GM13977 (cell line): ENCODE measurements at regions of chr10 and their contacts with region 1.

Region 1: DNA sequence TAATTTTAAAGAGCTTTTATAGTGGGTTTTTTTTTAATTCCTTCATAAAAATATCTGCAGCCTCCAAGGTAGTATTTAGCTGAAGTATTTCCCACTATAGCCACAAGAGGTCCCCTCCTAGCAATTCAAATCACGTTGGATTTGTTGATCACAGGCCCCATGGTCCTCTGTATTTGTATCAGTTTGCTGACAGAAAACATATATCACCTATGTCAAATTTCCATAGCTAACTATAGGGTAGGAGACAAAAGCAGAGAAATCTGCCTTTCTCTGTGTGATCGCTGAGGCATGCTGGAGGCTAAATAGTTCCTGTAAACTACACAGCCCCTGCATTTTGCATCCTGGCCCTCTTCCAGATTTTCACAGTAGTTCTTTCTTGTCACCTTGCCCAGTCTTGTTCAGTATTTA is 1.7 kb upstream of the CTNNA3 start:
- DNase-seq: peak; percentile 59
- CTCF ChIP-seq: peak; percentile 63

Region 2: DNA sequence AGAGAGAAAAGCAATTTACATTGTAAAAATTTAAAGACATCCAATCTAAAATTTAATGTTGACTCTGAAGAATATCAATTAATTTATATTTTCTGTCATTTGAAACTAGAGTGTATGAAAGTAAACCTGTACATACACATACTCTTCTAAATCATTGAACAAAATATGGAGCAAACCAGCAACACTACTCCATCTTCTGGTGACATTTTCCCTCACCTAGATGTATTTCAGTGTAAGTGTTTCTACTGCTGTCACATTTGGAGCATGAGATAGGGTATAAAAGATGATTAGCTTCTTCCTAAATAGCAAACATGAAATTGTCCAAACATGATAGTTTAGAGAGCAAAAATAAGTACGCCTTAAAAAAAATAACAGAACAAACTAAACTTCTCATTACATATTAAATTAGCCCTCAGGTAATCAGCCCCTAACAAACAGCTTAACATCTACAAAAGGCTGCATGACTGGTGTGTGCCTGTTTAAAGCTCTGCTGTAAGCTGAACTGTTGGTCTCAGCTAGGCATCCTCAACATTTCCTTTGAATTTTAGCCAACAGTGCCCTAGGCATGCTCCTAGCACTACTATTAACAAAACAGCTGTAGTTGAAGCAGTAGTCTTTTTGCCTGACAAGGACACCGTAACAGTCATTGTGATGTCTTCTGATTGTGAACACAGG is 191.5 kb before region 1 on chr10:
- in situ Hi-C with region 1: no loop called
- DNase-seq: no peak
- CTCF ChIP-seq: no peak

Region 3: DNA sequence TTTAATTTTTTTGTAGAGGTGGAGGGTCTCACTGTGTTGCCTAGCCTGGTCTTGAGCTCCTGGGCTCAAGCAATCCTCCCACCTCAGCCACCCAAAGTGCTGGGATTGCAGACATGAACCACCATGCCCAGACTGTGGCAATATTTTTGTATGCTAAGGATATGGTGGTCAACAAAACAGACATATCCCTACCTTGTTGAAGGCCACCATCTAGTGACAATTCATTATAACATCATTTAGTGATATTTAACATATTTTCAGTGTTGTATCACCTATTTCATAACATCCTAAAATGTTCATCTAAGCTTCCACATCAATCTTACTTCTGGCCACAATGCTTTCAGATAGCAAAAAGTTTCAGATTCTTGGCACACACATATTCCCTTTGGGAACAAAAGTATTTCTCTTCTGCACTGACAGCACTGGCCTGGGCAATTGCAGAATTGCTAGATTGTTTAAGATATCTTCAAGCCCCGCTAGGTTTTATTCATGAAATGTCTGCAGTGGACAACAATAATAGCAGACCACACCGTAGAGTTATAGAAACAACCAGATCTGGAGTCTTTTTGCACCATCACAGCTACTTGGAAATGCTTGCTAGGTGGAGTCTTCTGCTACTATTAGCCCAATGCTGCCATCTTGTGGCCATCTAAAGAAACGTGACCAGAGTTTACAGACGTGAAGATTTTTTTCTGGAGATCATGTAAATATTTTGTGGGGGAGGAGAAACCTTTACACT is 81.9 kb after region 1 on chr10:
- in situ Hi-C with region 1: loop called (anchors 5 kb)
- DNase-seq: peak; percentile 53
- CTCF ChIP-seq: peak; percentile 73

Region 4: DNA sequence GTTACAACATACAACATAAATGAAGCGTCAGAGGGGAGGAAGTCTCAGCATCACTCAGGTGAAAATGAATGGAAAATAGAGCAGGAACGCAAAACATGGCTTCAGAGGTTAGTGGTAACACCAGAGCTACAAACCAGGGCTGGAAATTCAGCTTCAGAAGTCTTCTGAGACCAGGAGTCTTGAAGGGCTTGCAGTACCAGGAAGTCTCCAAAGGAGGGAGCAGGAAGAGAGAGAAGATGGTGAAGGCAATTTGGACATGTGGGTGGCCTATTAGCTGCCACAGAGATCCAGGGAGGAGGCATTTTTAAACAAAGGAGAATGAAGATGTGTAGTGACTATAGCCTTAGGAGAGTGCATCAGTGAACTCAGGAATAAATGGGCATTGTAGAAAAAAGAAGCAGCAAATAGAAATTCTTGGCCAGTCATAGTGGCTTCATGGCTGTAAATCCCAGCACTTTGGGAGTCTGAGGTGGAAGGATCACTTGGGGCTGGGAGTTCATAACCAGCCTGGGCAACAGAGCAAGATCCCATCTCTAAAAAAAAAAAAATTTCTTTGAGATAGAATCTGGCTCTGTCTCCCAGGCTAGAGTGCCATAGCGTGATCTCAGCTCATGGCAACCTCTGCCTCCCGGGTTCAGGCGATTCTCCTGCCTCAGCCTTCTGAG is 853.2 kb after region 1 on chr10:
- in situ Hi-C with region 1: no loop called
- DNase-seq: peak; percentile 75
- CTCF ChIP-seq: peak; percentile 78